ENCODE measurements at regions of chr19 and their contacts with region 1.

Region 1: GRCh38 chr19:17859533-17860330 is at the start of gene RPL18A:
- DNase-seq: peak; percentile 98
- H3K4me3 ChIP-seq: peak within 1 kb of the TSS; percentile 92
- CTCF ChIP-seq: peak; percentile 91

Region 2: GRCh38 chr19:17390665-17391370 is 468.9 kb before region 1 on chr19:
- CTCF ChIA-PET with region 1: interaction called, 12 read pairs
- POLR2A ChIA-PET with region 1: no interaction called
- DNase-seq: peak; percentile 29
- H3K4me3 ChIP-seq: peak overlapping the region; percentile 63
- CTCF ChIP-seq: peak; percentile 76

Region 3: DNA sequence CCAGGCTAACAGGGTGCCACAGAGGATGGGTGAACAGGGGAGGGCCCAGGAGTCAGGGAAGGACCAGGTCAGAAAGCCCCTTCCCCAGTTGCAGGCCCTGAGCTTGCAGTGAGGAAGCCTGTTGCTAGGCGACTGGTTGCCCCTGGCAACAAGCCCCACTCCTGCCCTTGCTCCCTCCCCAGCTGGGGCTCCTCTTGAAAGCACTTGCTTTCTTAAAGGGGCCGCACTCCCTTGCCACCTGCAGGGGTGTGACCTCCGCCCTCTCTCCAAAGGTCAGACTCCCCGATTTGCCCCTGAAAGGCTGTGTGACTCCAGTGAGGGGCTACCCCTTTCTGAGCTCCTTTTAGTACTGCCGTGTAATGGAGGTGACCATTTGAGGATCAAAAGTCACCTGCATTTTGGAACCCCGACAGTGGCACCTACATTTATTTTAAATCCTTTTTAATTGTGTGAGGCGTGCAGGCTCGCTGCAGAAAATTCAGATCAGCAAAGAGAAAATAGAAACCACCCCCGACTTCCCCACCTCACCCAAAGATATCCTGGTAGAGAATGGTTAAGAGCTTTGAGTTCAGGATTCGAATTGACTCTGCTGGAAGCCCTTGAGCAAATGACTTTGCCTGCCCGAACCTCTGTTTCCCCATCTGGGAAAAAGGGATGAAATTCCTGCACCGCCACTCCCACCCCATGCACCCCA is 103.6 kb before region 1 on chr19:
- CTCF ChIA-PET with region 1: no interaction called
- POLR2A ChIA-PET with region 1: no interaction called
- DNase-seq: no peak
- H3K4me3 ChIP-seq: no peak overlapping the region
- CTCF ChIP-seq: no peak

Region 4: DNA sequence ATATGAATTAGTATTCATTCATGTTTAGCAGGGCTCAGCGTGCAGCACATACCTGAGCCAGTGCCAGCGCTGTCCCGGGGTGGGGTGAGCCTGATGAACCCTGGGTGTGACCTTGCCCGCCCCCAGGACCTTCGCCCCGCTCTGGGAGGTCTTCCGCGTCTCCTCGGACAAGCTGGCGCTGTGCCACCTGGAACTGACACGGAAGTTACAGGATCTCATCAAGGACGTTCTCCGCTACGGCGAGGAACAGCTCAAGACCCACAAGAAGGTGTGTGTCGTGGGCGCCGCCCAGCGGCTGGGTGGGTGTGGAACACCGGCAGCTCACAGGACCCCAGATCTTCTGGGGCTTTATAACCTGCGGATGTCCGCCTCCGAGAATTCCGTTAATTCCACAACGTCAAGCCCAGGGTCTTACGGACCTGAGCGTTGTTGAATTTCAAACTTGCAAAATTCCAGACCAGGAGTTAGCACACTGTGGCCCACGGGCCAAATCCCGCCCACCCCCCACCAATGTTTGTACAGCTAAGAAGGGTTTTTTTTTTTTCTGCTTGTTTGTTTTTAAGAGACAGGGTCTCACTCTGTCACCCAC is 93.1 kb before region 1 on chr19:
- CTCF ChIA-PET with region 1: interaction called, 13 read pairs
- POLR2A ChIA-PET with region 1: no interaction called
- DNase-seq: no peak
- H3K4me3 ChIP-seq: peak overlapping the region; percentile 25
- CTCF ChIP-seq: peak; percentile 85

Region 5: DNA sequence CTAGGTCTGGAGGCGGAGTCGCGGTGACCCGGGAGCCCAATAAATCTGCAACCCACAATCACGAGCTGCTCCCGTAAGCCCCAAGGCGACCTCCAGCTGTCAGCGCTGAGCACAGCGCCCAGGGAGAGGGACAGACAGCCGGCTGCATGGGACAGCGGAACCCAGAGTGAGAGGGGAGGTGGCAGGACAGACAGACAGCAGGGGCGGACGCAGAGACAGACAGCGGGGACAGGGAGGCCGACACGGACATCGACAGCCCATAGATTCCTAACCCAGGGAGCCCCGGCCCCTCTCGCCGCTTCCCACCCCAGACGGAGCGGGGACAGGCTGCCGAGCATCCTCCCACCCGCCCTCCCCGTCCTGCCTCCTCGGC is 12.1 kb after region 1 on chr19 and contains the start of gene SLC5A5:
- CTCF ChIA-PET with region 1: interaction called, 27 read pairs
- POLR2A ChIA-PET with region 1: interaction called, 4 read pairs
- DNase-seq: no peak
- H3K4me3 ChIP-seq: no peak within 1 kb of the TSS
- CTCF ChIP-seq: no peak

Region 6: GRCh38 chr19:17947815-17948513 is 88.2 kb after region 1 on chr19:
- CTCF ChIA-PET with region 1: interaction called, 11 read pairs
- POLR2A ChIA-PET with region 1: interaction called, 3 read pairs
- DNase-seq: no peak
- H3K4me3 ChIP-seq: peak overlapping the region; percentile 60
- CTCF ChIP-seq: no peak

Measured in AG04449 (cell line).